ENCODE measurements at regions of chr1 and their contacts with region 1.

Region 1: DNA sequence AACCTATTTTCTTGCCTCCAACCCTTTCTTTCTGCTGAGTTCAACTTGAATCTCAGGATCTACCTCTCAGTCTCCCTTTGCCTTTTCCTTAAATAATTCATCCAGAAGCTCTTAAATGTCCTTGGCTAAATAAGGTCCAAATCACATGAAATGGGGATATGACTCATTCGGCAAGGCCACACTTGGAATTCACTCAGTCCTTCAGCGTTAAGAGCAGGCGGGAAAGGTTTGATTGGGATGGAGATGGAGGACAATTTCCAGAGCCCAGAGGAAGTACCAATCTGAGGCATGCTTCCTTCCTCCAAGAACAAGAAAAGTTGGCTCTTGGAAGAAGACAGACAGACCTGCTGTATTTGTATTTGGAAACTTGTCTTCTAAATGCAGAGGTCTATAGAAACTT is 128.5 kb downstream of the PROX1 start:
- DNase-seq: no peak
- H3K4me3 ChIP-seq: no peak overlapping the region
- H3K27ac ChIP-seq: no peak overlapping the region
- H3K4me1 ChIP-seq: no peaks in the 10 kb centered on the region
- H3K27me3 ChIP-seq: no peaks in the 10 kb centered on the region
- CTCF ChIP-seq: no peak
- POLR2A ChIP-seq: no peak

Region 2: GRCh38 chr1:212586206-212587015 is 1529.8 kb before region 1 on chr1:
- intact Hi-C with region 1: loop called (anchors 5 kb)
- DNase-seq: no peak
- H3K4me3 ChIP-seq: no peak overlapping the region
- H3K27ac ChIP-seq: no peak overlapping the region
- H3K4me1 ChIP-seq: no peaks in the 10 kb centered on the region
- H3K27me3 ChIP-seq: no peaks in the 10 kb centered on the region
- CTCF ChIP-seq: no peak
- POLR2A ChIP-seq: no peak